ENCODE measurements at regions of chr16 and their contacts with region 1.

Region 1: DNA sequence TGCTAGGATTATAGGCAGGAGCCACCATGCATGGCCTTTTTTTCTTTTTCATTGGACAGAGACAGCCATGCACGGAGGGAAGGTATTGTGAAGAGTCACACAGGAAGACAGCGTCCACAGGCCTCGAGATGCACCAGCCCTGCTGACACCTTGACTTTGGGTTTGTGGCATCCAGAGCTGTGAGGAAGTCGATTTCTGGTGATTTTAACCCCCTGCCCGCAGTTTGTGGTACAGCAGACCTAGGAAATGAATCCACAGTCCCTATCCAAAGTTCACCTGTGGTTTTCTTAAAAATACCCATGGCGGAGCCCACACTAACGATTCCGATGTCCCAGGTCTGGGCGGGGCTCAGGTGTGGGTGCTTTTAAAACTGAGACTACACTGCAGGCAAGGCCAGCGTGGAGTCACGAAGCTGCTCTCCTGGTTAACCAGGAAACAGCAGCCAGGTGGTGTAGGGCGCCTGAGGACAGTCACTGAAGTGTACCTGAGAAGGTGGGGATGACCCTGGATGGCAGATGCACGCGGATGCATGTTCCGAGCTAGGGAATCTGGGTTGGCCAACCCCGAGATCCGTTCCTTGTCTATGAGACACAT is 14.4 kb upstream of the MEAK7 start:
- DNase-seq: peak; percentile 29 to 90 (median 66)
- ATAC-seq: peak; percentile 54
- H3K4me3 ChIP-seq: no peak overlapping the region
- H3K4me3 Mint-ChIP-seq: peak overlapping the region; percentile 45
- H3K27ac ChIP-seq: peak overlapping the region in 1 of 2 experiments; percentile 21
- H3K27ac Mint-ChIP-seq: peak overlapping the region; percentile 84
- H3K4me1 ChIP-seq: peaks cover 61% of the 10 kb centered on the region
- H3K4me1 Mint-ChIP-seq: peaks cover 61% of the 10 kb centered on the region
- H3K27me3 ChIP-seq: no peaks in the 10 kb centered on the region
- H3K27me3 Mint-ChIP-seq: no peaks in the 10 kb centered on the region
- CTCF ChIP-seq: no peak

Region 2: GRCh38 chr16:84459941-84460405 is 58.9 kb before region 1 on chr16:
- CTCF ChIA-PET with region 1: no interaction called
- POLR2A ChIA-PET with region 1: no interaction called
- intact Hi-C with region 1: no loop called
- DNase-seq: peak in 1 of 9 experiments; percentile 37
- ATAC-seq: no peak
- H3K4me3 ChIP-seq: no peak overlapping the region
- H3K4me3 Mint-ChIP-seq: no peak overlapping the region
- H3K27ac ChIP-seq: no peak overlapping the region
- H3K27ac Mint-ChIP-seq: no peak overlapping the region
- H3K4me1 ChIP-seq: no peaks in the 10 kb centered on the region
- H3K4me1 Mint-ChIP-seq: no peaks in the 10 kb centered on the region
- H3K27me3 ChIP-seq: no peaks in the 10 kb centered on the region
- H3K27me3 Mint-ChIP-seq: no peaks in the 10 kb centered on the region
- CTCF ChIP-seq: no peak

Region 3: DNA sequence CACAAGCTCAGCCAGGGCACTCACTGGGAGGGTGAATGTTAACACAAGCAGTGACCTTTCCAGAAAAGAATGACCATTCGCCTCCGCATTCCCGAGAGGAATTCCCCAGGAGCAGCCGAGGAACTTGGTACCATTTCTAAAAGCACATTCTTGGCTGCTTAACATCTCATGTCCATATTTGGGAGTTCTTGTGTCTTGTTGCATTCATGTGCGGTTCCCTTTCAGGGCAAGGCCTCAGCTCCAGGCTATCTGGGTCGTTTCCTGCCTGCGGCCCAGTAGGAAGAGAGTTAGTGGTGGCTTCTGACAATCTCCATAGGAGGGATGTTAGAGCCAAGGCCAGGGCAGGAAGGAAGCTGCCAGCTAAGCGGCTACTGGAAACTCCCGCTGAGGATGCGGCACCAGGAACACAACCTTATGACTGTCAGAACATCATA is 13.5 kb after region 1 on chr16:
- CTCF ChIA-PET with region 1: interaction called, 10 read pairs
- POLR2A ChIA-PET with region 1: interaction called, 4 read pairs
- intact Hi-C with region 1: no loop called
- DNase-seq: no peak
- ATAC-seq: no peak
- H3K4me3 ChIP-seq: no peak overlapping the region
- H3K4me3 Mint-ChIP-seq: no peak overlapping the region
- H3K27ac ChIP-seq: no peak overlapping the region
- H3K27ac Mint-ChIP-seq: no peak overlapping the region
- H3K4me1 ChIP-seq: no peaks in the 10 kb centered on the region
- H3K4me1 Mint-ChIP-seq: peaks cover 13% of the 10 kb centered on the region
- H3K27me3 ChIP-seq: no peaks in the 10 kb centered on the region
- H3K27me3 Mint-ChIP-seq: no peaks in the 10 kb centered on the region
- CTCF ChIP-seq: no peak

Region 4: GRCh38 chr16:84548971-84549844 is 30.4 kb after region 1 on chr16:
- CTCF ChIA-PET with region 1: interaction called, 4 read pairs
- POLR2A ChIA-PET with region 1: interaction called, 16 read pairs
- intact Hi-C with region 1: loop called in 1 of 2 experiments (anchors 2 kb)
- DNase-seq: peak; percentile 10 to 77 (median 40)
- ATAC-seq: peak; percentile 54
- H3K4me3 ChIP-seq: peak overlapping the region; percentile 45 to 63
- H3K4me3 Mint-ChIP-seq: peak overlapping the region; percentile 82
- H3K27ac ChIP-seq: peak overlapping the region; percentile 69 to 83
- H3K27ac Mint-ChIP-seq: peak overlapping the region; percentile 98
- H3K4me1 ChIP-seq: peaks cover 63% of the 10 kb centered on the region
- H3K4me1 Mint-ChIP-seq: peaks cover 68% of the 10 kb centered on the region
- H3K27me3 ChIP-seq: no peaks in the 10 kb centered on the region
- H3K27me3 Mint-ChIP-seq: no peaks in the 10 kb centered on the region
- CTCF ChIP-seq: no peak

Region 5: DNA sequence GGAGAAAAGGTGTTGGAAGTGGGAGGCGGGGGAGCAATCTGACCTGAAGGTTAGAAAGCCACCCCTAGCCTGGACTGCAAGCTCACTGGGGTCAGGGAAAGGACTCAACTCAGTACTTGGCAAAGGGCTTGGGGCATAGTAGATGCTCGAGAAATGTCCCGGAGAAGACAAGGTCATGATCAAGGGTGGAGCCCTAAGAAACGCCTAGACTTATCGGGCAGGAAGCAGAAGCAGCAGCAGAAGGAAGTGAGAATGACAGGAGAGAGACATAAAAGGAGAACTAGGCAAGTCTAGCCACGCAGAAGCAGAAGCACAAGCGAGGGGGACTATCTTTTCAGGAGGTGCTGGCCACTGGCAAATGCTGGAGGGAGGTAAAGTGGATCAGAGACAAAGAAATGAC is 88.8 kb after region 1 on chr16:
- CTCF ChIA-PET with region 1: interaction called, 392 read pairs
- POLR2A ChIA-PET with region 1: interaction called, 11 read pairs
- intact Hi-C with region 1: no loop called
- DNase-seq: peak in 4 of 9 experiments; percentile 30 to 72 (median 48)
- ATAC-seq: peak; percentile 34
- H3K4me3 ChIP-seq: peak overlapping the region; percentile 3 to 15
- H3K4me3 Mint-ChIP-seq: peak overlapping the region; percentile 55
- H3K27ac ChIP-seq: peak overlapping the region; percentile 16 to 62
- H3K27ac Mint-ChIP-seq: peak overlapping the region; percentile 85
- H3K4me1 ChIP-seq: peaks cover 93% of the 10 kb centered on the region
- H3K4me1 Mint-ChIP-seq: peaks cover 93% of the 10 kb centered on the region
- H3K27me3 ChIP-seq: no peaks in the 10 kb centered on the region
- H3K27me3 Mint-ChIP-seq: no peaks in the 10 kb centered on the region
- CTCF ChIP-seq: no peak